ENCODE measurements at regions of chr16 and their contacts with region 1.

Region 1: DNA sequence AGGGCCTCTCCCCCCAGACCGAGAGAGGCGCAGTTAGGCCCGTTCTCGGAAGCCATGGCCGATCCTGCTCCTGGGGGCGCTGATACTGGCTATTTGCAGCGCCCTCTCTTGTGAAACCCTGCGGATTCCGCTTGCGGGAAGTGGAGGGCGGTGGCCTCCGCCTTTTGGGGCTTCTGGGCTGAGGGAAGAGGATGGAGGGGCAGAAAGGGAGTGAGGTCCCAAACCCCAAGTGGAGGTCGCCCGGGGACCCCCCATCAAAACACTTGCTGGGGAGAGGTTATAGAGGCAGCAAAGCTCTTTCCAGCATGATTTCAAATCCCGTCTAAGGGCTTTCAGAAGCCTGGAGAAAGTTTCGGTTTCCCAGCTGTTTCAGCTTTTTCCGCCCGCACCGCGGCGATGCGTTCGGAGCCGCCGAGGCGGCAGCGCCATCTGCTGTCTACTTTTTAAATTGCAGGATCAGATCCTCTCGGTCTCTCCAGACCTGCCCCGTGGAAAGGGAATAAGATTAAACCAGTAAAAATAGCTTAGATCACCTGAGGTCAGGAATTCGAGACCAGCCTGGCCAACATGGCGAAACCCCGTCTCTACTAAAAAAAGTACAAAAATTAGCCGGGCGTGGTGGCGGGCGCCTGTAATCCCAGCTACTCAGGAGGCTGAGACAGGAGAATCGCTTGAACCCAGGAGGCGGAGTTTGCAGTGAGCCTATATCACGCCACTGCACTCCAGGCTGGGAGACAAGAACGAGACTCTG is 15.8 kb downstream of the SNX20 start:
- DNase-seq: peak; percentile 74
- H3K4me3 ChIP-seq: peak overlapping the region; percentile 63
- H3K27ac ChIP-seq: peak overlapping the region; percentile 76
- H3K4me1 ChIP-seq: peaks cover 21% of the 10 kb centered on the region
- H3K27me3 ChIP-seq: no peaks in the 10 kb centered on the region
- CTCF ChIP-seq: peak; percentile 95

Region 2: GRCh38 chr16:50210266-50211038 is 454.9 kb before region 1 on chr16:
- intact Hi-C with region 1: loop called (anchors 10 kb)
- DNase-seq: peak; percentile 80
- H3K4me3 ChIP-seq: no peak overlapping the region
- H3K27ac ChIP-seq: no peak overlapping the region
- H3K4me1 ChIP-seq: peaks cover 49% of the 10 kb centered on the region
- H3K27me3 ChIP-seq: no peaks in the 10 kb centered on the region
- CTCF ChIP-seq: peak; percentile 79

Region 3: GRCh38 chr16:50371936-50372595 is 293.2 kb before region 1 on chr16:
- intact Hi-C with region 1: loop called (anchors 5 kb)
- DNase-seq: no peak
- H3K4me3 ChIP-seq: no peak overlapping the region
- H3K27ac ChIP-seq: peak overlapping the region; percentile 54
- H3K4me1 ChIP-seq: peaks cover 36% of the 10 kb centered on the region
- H3K27me3 ChIP-seq: no peaks in the 10 kb centered on the region
- CTCF ChIP-seq: peak; percentile 37

Region 4: DNA sequence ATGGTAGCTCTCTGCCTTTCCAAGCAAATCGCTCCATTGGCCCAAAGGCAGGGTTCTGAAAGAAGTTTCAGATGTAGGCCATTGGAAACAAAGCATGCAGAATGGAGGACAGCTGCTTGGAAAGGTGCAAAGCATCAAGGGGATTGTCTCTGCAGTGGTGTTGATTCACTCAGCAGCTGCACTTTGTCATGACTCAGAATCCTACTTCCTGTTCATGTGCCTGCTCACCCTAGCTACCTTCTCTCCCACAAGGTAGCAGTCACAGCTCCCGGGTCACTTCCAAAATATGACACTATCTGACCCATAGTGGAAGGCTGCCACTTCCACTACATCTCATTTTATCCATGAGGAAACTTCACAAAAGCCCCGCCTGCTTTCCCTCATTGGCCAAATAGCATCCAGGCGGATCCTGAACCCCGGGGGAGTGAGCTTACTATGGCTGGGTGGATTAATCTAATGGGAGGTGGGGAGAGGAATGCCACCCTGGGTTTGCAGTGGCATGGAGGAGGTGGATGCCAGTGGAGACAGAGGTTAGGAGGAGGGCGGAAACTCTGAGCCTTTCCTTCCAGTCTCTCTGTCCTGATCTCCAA is 191.9 kb before region 1 on chr16:
- intact Hi-C with region 1: no loop called
- DNase-seq: no peak
- H3K4me3 ChIP-seq: no peak overlapping the region
- H3K27ac ChIP-seq: no peak overlapping the region
- H3K4me1 ChIP-seq: peaks cover 6% of the 10 kb centered on the region
- H3K27me3 ChIP-seq: peaks cover 72% of the 10 kb centered on the region
- CTCF ChIP-seq: no peak

Measured in left ventricle myocardium inferior (tissue), 1 donor.